Mucosa of descending colon (tissue), 3 donors: ENCODE measurements at regions of chr11 and their contacts with region 1.

Region 1: GRCh38 chr11:120172054-120172911 is 34.4 kb upstream of the TRIM29 start:
- DNase-seq: peak; percentile 61 to 75 (median 74)
- ATAC-seq: peak; percentile 80
- H3K4me3 ChIP-seq: no peak overlapping the region
- H3K4me1 ChIP-seq: peaks cover 10% of the 10 kb centered on the region
- CTCF ChIP-seq: peak; percentile 69

Region 2: GRCh38 chr11:120068114-120068573 is 104.1 kb before region 1 on chr11:
- intact Hi-C with region 1: no loop called
- DNase-seq: peak in 1 of 3 donors; percentile 11
- ATAC-seq: peak; percentile 47
- H3K4me3 ChIP-seq: no peak overlapping the region
- H3K4me1 ChIP-seq: no peaks in the 10 kb centered on the region
- CTCF ChIP-seq: no peak

Region 3: DNA sequence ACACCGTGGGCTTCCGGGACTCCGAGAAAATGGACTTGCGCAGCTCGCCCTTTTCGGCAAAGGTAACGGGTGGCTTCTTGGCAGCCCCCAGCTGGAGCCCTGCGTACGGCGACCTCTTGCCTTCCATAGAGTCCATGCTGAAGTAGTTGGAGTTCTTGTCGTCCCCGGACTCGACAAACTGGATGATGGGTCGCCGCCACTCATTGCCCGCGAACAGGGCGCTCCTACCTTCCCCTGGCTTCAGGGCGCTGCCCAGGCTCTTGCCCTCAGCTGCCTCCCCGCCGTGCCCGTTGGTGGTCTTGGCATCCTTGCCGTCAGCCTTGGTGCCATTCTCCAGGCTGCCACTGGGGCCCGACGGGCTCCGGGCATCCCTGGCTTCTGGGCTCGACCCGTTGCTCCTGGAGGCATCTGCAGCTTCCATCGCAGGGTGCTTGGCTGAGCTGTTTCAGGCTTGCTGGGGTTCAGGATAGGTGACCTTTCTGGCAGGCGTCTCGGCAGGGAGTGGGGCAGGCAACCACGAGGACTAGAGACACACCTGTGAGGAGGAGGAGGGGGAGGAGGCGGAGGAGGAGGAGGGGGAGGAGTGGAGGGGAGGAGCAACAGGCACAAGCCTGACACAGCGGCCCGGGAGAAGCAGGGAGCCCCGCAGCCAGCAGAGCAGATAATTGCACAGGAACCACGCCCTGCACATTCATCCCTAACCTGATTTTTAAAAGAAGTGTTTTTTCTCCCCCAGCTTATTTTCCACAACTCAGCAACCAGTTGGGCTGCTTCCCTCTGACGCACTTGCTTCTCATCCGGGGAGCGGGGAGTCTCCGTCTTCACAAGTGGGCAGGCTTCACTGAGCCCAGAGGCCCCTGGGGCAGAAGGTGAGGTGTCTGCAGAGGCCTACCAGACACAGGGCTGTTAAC is 34.4 kb before region 1 on chr11 and contains the start of gene TRIM29:
- intact Hi-C with region 1: no loop called
- DNase-seq: peak in 2 of 3 donors; percentile 56 to 73
- ATAC-seq: peak; percentile 82
- H3K4me3 ChIP-seq: no peak within 1 kb of the TSS
- H3K4me1 ChIP-seq: no peaks in the 10 kb centered on the region
- CTCF ChIP-seq: no peak
- total RNA-seq, gene TRIM29: 4.0 to 6.3 (median 5.4) TPM

Region 4: GRCh38 chr11:120229451-120230424 is 57.5 kb after region 1 on chr11:
- intact Hi-C with region 1: loop called (anchors 5 kb)
- DNase-seq: peak in 2 of 3 donors; percentile 42 to 55
- ATAC-seq: no peak
- H3K4me3 ChIP-seq: no peak overlapping the region
- H3K4me1 ChIP-seq: peaks cover 4% of the 10 kb centered on the region
- CTCF ChIP-seq: peak; percentile 48

Region 5: DNA sequence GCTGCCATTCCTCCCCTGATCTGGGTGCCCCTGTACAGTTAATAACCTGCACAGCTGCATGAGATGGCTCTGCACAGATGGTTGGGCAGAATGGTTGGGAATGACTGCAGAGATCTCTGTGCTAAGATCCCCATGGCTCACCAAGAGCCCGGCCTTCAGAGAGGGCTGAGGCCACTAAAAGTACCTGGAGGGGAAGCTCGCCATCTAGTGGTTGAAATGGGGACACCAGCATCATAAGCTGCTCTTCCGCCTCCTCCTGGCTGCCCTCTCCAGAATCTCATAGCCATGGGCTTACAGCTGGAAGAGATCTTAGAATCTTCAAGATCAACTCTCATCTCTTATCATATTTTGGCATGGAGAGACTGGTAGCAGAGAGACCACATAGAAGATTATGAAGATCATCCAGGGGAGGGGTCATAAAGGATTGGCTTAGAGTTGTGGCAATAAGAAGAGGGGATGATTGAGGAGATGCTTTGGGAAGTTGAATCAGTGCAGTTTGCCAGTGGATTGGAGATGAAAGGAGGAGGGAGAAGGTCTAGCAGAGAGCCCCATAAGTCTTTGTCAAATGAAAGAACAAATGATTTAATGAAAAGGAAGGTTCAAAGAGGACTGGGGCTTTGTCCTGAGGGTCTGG is 130.8 kb after region 1 on chr11:
- intact Hi-C with region 1: loop called (anchors 5 kb)
- DNase-seq: peak in 2 of 3 donors; percentile 64 to 92
- ATAC-seq: peak; percentile 77
- H3K4me3 ChIP-seq: no peak overlapping the region
- H3K4me1 ChIP-seq: peaks cover 23% of the 10 kb centered on the region
- CTCF ChIP-seq: peak; percentile 76